BJ (cell line): ENCODE measurements at regions of chr1 and their contacts with region 1.

Region 1: GRCh38 chr1:114346480-114347029 is 164.4 kb downstream of the TRIM33 start:
- DNase-seq: peak; percentile 46
- H3K4me3 ChIP-seq: peak overlapping the region; percentile 30
- H3K27me3 ChIP-seq: peaks cover 1% of the 10 kb centered on the region
- CTCF ChIP-seq: peak; percentile 100

Region 2: GRCh38 chr1:113978863-113979702 is 367.5 kb before region 1 on chr1 and contains the start of gene OLFML3:
- CTCF ChIA-PET with region 1: interaction called, 18 read pairs
- POLR2A ChIA-PET with region 1: no interaction called
- DNase-seq: peak; percentile 89
- H3K4me3 ChIP-seq: peak within 1 kb of the TSS; percentile 45
- H3K27me3 ChIP-seq: no peaks in the 10 kb centered on the region
- CTCF ChIP-seq: peak; percentile 69
- polyA plus RNA-seq, gene OLFML3: 72.6 and 76.8 TPM in 2 replicates

Region 3: DNA sequence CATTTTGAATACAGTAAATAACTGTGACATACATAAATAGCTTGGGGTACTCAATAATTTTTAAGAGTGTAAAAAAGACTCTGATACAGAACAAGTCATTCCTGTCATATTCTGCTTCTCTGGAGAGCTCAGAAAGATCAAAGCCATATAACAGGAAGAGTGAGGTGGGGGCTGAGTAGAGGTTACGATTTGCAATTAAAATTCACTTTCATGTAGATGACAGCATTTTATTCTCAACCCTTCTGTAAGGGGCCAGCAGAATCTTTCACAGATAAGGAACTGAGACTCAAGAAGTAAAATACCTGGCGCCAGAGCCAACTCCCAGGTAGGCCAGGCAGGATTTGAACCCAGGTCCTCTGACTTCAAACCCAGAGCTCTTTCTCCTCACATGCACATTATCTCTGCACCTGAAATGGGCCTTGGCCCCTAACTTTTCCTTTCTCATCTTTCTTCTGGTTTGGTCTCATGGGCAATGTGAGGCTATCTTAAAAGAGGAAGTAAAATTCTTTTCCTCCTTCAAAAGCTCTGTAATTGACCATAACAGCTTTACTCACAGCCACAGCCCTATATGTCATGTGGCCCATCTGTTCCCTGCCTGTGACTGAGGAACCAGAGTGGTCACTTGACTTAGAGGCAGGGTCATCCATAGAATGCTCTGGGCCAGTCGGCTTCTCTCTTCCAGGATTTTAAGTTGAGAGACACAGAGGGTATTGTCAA is 112.0 kb before region 1 on chr1:
- CTCF ChIA-PET with region 1: no interaction called
- POLR2A ChIA-PET with region 1: no interaction called
- DNase-seq: no peak
- H3K4me3 ChIP-seq: no peak overlapping the region
- H3K27me3 ChIP-seq: peaks cover 2% of the 10 kb centered on the region; the same call in 1 of the 2 replicates
- CTCF ChIP-seq: no peak

Region 4: DNA sequence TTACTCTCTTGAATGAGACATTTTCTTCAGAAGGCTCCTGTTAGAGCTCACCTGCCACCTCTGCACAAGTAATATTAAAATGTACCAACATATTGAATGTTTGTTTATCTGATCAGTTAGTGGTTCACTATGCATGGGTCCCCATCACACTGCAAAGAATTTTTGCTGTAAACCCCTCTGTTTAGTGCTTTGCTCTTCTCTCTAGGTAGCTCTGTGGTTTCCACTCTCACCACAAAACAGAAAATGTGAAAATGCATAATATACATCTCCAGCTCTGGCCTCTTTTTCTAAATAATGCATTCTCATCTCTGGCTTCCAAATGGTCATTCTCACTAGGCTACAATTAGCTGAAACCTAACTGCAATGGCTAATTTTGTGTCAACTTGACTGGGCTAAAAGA is 12.3 kb before region 1 on chr1:
- CTCF ChIA-PET with region 1: interaction called, 21 read pairs
- POLR2A ChIA-PET with region 1: no interaction called
- DNase-seq: no peak
- H3K4me3 ChIP-seq: no peak overlapping the region
- H3K27me3 ChIP-seq: peaks cover 11% of the 10 kb centered on the region
- CTCF ChIP-seq: no peak

Region 5: GRCh38 chr1:114359750-114360149 is 13.2 kb after region 1 on chr1:
- CTCF ChIA-PET with region 1: interaction called, 10 read pairs
- POLR2A ChIA-PET with region 1: no interaction called
- DNase-seq: no peak
- H3K4me3 ChIP-seq: no peak overlapping the region
- H3K27me3 ChIP-seq: 0 out of 2 replicates have a peak, but pooled peaks cover 1% of the 10 kb centered on the region
- CTCF ChIP-seq: no peak

Region 6: DNA sequence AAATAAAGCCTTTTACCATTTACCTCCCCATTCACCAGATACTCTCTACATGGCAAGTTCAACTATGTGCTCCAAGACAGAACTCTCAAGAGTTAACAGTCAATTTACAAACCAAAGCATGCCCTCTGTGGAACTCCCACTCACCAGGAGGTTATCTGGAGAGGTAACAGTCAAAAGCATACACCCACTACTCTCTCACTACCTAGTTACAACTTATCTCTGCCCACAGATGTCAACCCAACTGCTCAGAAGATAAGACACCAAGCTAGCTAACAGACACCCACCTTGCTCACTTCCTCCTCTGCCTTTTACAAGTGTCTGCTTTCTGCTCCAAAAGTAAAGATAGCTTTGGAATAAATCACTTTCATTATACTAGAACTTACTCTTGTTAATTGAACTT is 33.4 kb after region 1 on chr1:
- CTCF ChIA-PET with region 1: interaction called, 10 read pairs
- POLR2A ChIA-PET with region 1: no interaction called
- DNase-seq: no peak
- H3K4me3 ChIP-seq: no peak overlapping the region
- H3K27me3 ChIP-seq: no peaks in the 10 kb centered on the region
- CTCF ChIP-seq: no peak

Region 7: DNA sequence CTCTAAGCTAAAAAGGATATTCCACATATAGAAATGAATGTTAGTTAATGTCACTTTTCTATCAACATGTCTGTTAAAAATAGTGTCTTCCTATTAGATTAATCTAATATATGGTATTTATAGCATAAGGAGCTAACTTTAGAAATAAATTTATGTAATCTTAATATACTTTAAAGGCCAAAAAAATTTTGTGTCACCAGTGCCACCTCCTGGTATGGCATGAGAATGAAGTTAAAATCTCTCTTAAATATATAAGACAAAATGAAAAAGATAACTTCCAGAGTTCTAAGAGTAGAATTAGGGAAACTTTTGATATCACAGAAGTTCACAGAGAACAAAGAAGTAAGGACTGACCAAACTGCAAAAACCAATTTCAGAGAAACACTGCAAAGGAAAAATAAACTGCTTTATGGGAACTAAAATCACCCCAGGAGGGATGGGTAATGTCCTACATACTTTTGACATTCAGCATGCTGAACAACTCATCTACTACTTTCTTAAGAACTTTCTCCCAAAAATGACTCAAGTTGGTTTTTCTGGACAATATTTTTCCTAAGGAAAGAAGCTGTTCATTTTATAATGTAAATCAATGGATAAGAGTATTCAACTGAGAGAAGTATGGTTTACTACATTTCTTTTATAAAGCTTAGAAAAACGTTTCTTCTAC is 81.7 kb after region 1 on chr1:
- CTCF ChIA-PET with region 1: interaction called, 20 read pairs
- POLR2A ChIA-PET with region 1: no interaction called
- DNase-seq: no peak
- H3K4me3 ChIP-seq: no peak overlapping the region
- H3K27me3 ChIP-seq: no peaks in the 10 kb centered on the region
- CTCF ChIP-seq: peak; percentile 52

Region 8: GRCh38 chr1:114467488-114467887 is 120.9 kb after region 1 on chr1:
- CTCF ChIA-PET with region 1: no interaction called
- POLR2A ChIA-PET with region 1: no interaction called
- DNase-seq: no peak
- H3K4me3 ChIP-seq: no peak overlapping the region
- H3K27me3 ChIP-seq: no peaks in the 10 kb centered on the region
- CTCF ChIP-seq: no peak